Mammary epithelial cell (primary cell): ENCODE measurements at regions of chr7 and their contacts with region 1.

Region 1: GRCh38 chr7:100081535-100082102 is at the start of gene ZNF3:
- DNase-seq: peak; percentile 99
- H3K4me3 ChIP-seq: peak within 1 kb of the TSS; percentile 61 to 99 (median 77)
- H3K27ac ChIP-seq: peak within 1 kb of the TSS; percentile 69
- H3K4me1 ChIP-seq: peaks cover 8% of the 10 kb centered on the region
- H3K27me3 ChIP-seq: no peaks in the 10 kb centered on the region
- CTCF ChIP-seq: peak; percentile 56 to 91
- total RNA-seq, gene ZNF3: 22.6 to 28.7 TPM

Region 2: DNA sequence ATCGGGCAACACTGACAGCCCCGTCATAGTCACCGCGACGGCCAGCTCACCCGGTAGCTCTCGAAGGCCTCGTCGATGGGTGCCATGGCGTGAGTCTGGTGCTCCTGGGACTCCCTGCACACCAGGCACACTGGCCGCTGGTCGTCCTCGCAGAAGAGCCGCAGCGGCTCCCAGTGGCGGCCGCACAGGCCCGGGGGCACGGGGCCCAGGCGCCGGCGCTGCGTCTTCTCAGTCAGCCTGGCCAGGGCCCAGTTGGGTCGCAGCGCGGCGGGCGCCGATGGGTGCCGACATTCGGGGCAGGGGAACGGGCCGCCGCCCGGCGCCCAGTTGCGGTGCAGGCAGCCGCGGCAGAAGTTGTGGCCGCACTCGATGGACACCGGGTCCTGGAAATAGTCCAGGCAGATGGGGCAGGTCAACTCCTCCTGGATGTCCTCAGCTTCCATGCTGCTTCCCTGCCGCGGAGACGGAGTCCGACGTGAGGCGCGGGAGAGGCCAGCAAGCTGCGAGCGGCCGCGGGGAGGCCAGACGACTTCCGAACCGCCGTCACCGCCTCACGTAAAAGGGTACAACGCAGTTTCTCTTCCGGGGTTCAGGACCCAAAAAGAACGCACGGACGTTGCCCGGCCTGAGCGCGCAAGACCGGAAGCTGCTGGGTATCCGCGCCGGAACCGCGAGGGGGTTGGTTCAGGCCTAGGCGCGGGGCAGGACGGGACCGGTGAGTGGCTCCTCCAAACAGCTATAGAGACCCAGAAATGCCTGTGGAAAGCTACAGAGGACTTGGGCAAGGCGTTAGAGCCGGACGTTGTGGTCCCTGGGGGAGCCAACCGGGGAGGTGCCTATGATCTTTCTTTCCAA is 162.4 kb before region 1 on chr7 and contains the start of gene TRIM4:
- CTCF ChIA-PET with region 1: no interaction called
- dilution Hi-C with region 1: no loop called
- in situ Hi-C with region 1: no loop called
- intact Hi-C with region 1: loop called (anchors 1 kb)
- DNase-seq: peak; percentile 94
- H3K4me3 ChIP-seq: peak within 1 kb of the TSS; percentile 79 to 90 (median 86)
- H3K27ac ChIP-seq: peak within 1 kb of the TSS; percentile 73
- H3K4me1 ChIP-seq: peaks cover 26% of the 10 kb centered on the region
- H3K27me3 ChIP-seq: no peaks in the 10 kb centered on the region
- CTCF ChIP-seq: peak; percentile 5 to 49
- total RNA-seq, gene TRIM4: 23.2 to 24.5 TPM

Region 3: DNA sequence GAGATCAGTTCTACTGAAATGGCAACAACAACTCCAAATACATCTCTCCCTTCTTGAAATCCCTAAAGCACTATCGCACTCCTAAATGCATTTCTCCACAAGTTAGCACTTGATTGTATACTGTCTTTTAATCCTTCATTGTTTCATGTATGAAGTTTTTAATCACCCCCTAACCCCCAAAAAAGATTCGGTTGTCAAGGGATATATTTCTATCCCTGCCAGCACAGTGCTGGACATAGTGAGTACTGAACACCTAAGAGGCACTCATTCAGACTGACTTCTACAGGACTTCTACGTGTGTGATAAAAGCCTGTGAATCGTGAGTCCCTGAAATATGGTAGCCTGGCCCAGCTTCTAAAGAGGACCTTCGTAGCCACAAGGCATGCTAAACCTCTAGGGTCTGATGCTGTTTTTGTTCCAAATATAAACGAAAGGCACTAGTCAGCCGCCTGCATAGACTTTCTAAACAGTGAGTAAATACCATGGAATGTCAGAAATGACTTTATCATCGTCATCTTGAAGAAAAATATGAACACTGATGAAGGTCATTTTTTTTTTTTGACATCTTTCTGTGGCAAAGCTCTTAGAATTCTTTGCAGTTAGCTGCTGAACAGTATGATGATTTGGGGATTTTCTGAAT is 46.6 kb before region 1 on chr7:
- CTCF ChIA-PET with region 1: no interaction called
- dilution Hi-C with region 1: loop called (anchors 5 kb)
- in situ Hi-C with region 1: no loop called
- intact Hi-C with region 1: no loop called
- DNase-seq: no peak
- H3K4me3 ChIP-seq: no peak overlapping the region
- H3K27ac ChIP-seq: no peak overlapping the region
- H3K4me1 ChIP-seq: peaks cover under 1% of the 10 kb centered on the region
- H3K27me3 ChIP-seq: no peaks in the 10 kb centered on the region
- CTCF ChIP-seq: no peak

Region 4: DNA sequence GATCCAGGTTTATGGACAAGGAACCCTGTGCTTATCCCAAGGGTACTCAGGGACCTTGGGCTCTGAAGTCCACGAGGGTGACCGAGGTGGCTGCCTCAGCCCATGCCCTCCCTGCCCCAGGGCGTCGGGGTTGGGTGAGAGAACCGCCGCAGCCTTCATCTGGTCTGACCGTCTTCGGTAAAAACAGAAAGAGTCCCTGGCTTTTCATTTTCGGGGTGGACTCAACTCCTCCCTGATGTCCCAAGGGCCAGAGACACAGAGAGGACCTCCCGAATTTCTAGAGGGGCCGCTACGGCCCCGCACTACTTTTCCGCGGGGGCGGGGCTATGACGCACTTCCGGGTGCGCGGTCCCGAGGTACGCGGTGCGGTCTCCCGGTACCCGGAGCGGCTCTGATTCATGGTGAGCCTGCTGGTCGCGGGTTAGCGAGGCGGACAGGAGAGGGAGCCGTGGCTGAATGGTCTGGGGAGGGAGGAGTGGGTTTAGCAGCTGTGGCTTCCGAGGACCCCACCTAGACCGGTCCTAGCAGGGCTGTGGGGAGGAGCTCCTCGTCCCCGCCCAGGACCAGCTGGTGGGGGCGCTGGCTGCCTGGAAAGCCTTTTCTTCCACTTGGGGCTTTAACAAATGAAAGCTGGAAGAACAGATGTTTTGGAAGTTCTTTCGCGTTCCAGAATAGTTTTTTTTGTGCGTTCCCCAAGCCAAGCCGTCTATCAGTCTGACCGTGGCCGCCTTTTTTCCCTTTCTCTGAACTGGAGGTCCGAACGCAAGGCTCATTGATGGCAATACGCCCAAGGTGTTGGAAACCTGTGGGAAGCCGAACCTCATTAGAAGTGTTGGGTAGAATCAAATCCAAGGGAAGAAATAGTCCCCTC is 31.9 kb before region 1 on chr7 and contains the start of gene ZSCAN21:
- CTCF ChIA-PET with region 1: no interaction called
- dilution Hi-C with region 1: no loop called
- in situ Hi-C with region 1: no loop called
- intact Hi-C with region 1: loop called (anchors 2 kb)
- DNase-seq: peak; percentile 79
- H3K4me3 ChIP-seq: peak within 1 kb of the TSS; percentile 85 to 97 (median 86)
- H3K27ac ChIP-seq: peak within 1 kb of the TSS; percentile 86
- H3K4me1 ChIP-seq: peaks cover 6% of the 10 kb centered on the region
- H3K27me3 ChIP-seq: no peaks in the 10 kb centered on the region
- CTCF ChIP-seq: peak in 1 of 2 donors; percentile 24
- total RNA-seq, gene ZSCAN21: 10.8 to 15.0 TPM

Region 5: GRCh38 chr7:100101016-100101862 is 19.6 kb after region 1 on chr7 and contains the starts of genes AP4M1 and MCM7:
- CTCF ChIA-PET with region 1: no interaction called
- dilution Hi-C with region 1: no loop called
- in situ Hi-C with region 1: no loop called
- intact Hi-C with region 1: loop called (anchors 2 kb)
- DNase-seq: peak; percentile 99
- H3K4me3 ChIP-seq: peak within 1 kb of the TSS; percentile 90 to 95 (median 94)
- H3K27ac ChIP-seq: peak within 1 kb of the TSS; percentile 93
- H3K4me1 ChIP-seq: peaks cover 14% of the 10 kb centered on the region
- H3K27me3 ChIP-seq: no peaks in the 10 kb centered on the region
- CTCF ChIP-seq: no peak
- total RNA-seq, gene AP4M1: 13.0 to 17.4 TPM
- total RNA-seq, gene MCM7: 16.0 to 114 TPM

Region 6: DNA sequence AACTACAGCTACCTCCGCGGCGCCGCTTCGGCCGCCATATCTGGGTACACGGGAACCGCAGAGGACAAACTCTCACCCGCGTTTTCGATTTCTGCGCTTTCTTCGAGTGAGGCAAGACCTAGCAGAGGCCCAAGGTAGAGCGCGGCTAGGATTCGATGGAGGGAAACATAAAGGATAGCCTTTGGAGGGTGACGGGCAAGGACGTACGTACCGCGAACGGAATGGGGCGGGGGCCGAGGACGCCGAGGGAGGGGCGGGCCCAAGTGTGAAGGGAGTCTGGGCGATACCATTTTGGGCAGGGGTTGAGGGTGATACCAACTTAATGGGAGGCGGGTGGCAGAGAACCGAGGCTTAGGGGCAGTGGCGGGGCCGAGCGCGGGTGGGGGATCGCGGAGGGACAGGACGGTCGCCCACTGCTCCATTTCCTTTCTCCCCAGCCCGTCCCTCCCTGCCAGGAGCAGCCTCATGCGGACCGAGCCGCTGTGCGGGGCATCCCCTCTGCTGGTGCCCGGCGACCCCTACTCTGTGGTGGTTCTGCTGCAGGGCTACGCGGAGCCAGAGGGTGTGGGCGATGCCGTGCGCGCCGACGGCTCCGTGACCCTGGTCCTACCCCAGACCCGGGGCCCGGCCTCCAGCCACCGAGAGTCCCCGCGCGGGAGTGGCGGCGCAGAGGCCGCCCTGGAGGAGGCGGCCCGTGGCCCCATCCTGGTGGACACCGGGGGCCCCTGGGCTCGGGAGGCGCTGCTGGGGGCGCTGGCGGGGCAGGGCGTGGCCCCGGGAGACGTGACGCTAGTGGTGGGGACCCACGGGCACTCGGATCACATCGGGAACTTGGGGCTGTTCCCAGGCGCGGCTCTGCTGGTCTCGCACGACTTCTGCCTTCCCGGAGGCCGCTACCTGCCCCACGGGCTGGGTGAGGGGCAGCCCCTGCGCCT is 45.6 kb after region 1 on chr7 and contains the start of gene MBLAC1:
- CTCF ChIA-PET with region 1: interaction called, 3 read pairs
- dilution Hi-C with region 1: no loop called
- in situ Hi-C with region 1: no loop called
- intact Hi-C with region 1: loop called (anchors 5 kb)
- DNase-seq: peak; percentile 86
- H3K4me3 ChIP-seq: peak within 1 kb of the TSS; percentile 62 to 95 (median 90)
- H3K27ac ChIP-seq: peak within 1 kb of the TSS; percentile 90
- H3K4me1 ChIP-seq: peaks cover 7% of the 10 kb centered on the region
- H3K27me3 ChIP-seq: no peaks in the 10 kb centered on the region
- CTCF ChIP-seq: no peak
- total RNA-seq, gene MBLAC1: 1.2 to 1.5 TPM